ENCODE measurements at regions of chr2 and their contacts with region 1.

Region 1: DNA sequence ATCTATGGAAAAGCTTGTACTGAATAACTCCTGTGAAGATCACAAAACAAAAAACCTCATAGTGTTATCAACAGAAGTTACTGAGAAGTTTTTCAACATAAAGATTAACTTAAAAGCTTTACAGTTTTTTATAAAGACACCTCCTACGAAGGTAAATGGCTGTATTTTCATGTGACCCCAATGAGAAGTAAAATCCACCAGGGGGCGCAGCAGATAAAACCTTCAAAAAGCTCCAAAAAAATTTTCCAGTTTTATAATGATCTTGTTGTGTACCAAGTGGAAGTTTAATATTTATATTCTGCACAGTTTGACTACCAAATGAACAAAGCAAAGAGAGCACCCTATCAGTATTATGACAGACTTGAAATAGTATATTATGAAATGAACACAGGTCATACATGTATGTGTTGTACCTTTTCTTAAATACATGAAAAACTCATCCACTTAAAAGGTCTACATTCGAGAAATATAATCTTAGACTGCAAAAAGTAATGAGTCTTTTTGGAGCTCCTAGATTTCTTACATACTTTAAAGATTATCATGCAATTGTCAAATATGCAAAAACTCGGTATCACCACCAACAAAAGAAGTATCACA is 38.5 kb downstream of the PNO1 start:
- DNase-seq: peak; percentile 45
- H3K4me3 ChIP-seq: no peak overlapping the region
- H3K27ac ChIP-seq: no peak overlapping the region
- H3K4me1 ChIP-seq: peaks cover 36% of the 10 kb centered on the region
- H3K27me3 ChIP-seq: no peaks in the 10 kb centered on the region
- CTCF ChIP-seq: peak; percentile 30 to 35
- POLR2A ChIP-seq: no peak

Region 2: DNA sequence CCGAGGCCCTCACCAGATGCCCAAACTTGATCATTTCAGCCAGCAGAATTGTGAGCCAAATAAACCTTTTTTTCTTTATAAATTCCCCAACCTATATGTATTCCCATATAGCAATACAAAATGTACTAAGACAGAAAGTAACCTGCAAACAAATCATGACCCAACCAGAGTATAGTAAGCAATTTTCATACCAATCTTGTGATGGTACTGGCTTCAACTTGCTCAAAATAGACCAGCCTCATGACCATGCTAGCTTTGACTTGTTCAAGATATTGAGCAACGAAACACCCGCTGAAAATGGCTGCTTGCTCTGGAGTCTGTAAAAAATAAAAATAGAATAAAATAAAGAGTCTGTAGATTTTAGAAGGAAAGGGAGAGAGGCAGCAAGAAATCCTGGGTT is 231.0 kb before region 1 on chr2:
- CTCF ChIA-PET with region 1: no interaction called
- POLR2A ChIA-PET with region 1: no interaction called
- dilution Hi-C with region 1: no loop called
- intact Hi-C with region 1: no loop called
- DNase-seq: no peak
- H3K4me3 ChIP-seq: no peak overlapping the region
- H3K27ac ChIP-seq: no peak overlapping the region
- H3K4me1 ChIP-seq: no peaks in the 10 kb centered on the region
- H3K27me3 ChIP-seq: no peaks in the 10 kb centered on the region
- CTCF ChIP-seq: no peak
- POLR2A ChIP-seq: no peak

Region 3: GRCh38 chr2:68044099-68044498 is 152.1 kb before region 1 on chr2:
- CTCF ChIA-PET with region 1: no interaction called
- POLR2A ChIA-PET with region 1: no interaction called
- dilution Hi-C with region 1: no loop called
- intact Hi-C with region 1: no loop called
- DNase-seq: peak; percentile 25
- H3K4me3 ChIP-seq: no peak overlapping the region
- H3K27ac ChIP-seq: peak overlapping the region; percentile 21
- H3K4me1 ChIP-seq: peaks cover 4% of the 10 kb centered on the region
- H3K27me3 ChIP-seq: no peaks in the 10 kb centered on the region
- CTCF ChIP-seq: no peak
- POLR2A ChIP-seq: no peak

Region 4: GRCh38 chr2:68185541-68186164 is 10.6 kb before region 1 on chr2:
- CTCF ChIA-PET with region 1: interaction called, 36 read pairs
- POLR2A ChIA-PET with region 1: no interaction called
- dilution Hi-C with region 1: no loop called
- intact Hi-C with region 1: no loop called
- DNase-seq: peak; percentile 37
- H3K4me3 ChIP-seq: no peak overlapping the region
- H3K27ac ChIP-seq: no peak overlapping the region
- H3K4me1 ChIP-seq: no peaks in the 10 kb centered on the region
- H3K27me3 ChIP-seq: no peaks in the 10 kb centered on the region
- CTCF ChIP-seq: peak; percentile 70 to 80
- POLR2A ChIP-seq: no peak

Region 5: DNA sequence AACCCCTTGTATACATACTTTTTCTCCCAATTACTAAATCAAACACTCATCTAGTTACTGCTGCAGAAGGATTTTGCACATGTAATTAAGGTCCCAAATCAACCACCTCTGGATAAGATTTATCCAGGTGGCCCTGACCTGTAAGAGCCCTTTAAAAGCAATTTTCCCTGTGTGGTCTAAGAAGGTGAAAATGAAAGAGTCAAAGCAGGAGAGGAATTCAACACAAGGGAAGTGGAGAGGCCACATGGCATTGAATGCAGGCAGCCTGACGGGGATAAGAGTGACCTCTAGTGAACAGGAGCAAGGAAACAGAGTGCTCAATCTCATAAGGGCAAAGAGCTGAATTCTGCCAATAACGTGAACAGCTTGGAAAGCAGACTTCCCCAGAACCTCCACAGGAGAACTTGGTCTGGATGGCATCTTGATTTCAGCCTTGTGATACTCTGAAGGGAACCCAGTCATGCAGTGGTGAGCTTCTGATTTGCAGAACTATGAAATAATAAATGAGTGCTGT is 29.0 kb after region 1 on chr2:
- CTCF ChIA-PET with region 1: interaction called, 43 read pairs
- POLR2A ChIA-PET with region 1: no interaction called
- dilution Hi-C with region 1: no loop called
- intact Hi-C with region 1: no loop called
- DNase-seq: peak; percentile 34
- H3K4me3 ChIP-seq: no peak overlapping the region
- H3K27ac ChIP-seq: no peak overlapping the region
- H3K4me1 ChIP-seq: peaks cover 3% of the 10 kb centered on the region
- H3K27me3 ChIP-seq: no peaks in the 10 kb centered on the region
- CTCF ChIP-seq: peak in 1 of 2 donors; percentile 11
- POLR2A ChIP-seq: no peak

Region 6: DNA sequence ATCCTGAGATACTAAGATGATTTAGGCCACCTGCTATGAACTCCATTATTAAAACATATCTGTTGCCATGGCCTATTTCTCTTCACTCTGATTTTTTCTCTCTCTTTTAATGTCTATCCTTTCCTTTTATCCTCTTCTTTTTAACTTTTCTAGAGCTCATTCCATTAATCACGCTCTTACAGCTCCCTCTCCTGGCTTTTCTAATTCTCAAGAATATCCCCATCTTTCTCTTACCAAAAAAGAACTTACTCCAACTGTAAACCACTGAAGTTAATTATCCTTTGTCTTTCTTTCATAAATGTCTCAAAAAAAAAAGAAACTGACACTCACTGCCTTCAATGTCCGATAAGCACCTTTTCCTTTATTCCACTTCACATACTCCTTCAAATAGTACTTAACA is 48.2 kb after region 1 on chr2:
- CTCF ChIA-PET with region 1: interaction called, 52 read pairs
- POLR2A ChIA-PET with region 1: no interaction called
- dilution Hi-C with region 1: no loop called
- intact Hi-C with region 1: no loop called
- DNase-seq: no peak
- H3K4me3 ChIP-seq: no peak overlapping the region
- H3K27ac ChIP-seq: no peak overlapping the region
- H3K4me1 ChIP-seq: peaks cover 21% of the 10 kb centered on the region
- H3K27me3 ChIP-seq: no peaks in the 10 kb centered on the region
- CTCF ChIP-seq: no peak
- POLR2A ChIP-seq: no peak

Region 7: GRCh38 chr2:68282811-68283418 is 86.7 kb after region 1 on chr2:
- CTCF ChIA-PET with region 1: interaction called, 175 read pairs
- POLR2A ChIA-PET with region 1: no interaction called
- dilution Hi-C with region 1: no loop called
- intact Hi-C with region 1: loop called (anchors 1 kb)
- DNase-seq: peak; percentile 35
- H3K4me3 ChIP-seq: no peak overlapping the region
- H3K27ac ChIP-seq: no peak overlapping the region
- H3K4me1 ChIP-seq: no peaks in the 10 kb centered on the region
- H3K27me3 ChIP-seq: no peaks in the 10 kb centered on the region
- CTCF ChIP-seq: peak; percentile 43 to 61
- POLR2A ChIP-seq: no peak

Region 8: DNA sequence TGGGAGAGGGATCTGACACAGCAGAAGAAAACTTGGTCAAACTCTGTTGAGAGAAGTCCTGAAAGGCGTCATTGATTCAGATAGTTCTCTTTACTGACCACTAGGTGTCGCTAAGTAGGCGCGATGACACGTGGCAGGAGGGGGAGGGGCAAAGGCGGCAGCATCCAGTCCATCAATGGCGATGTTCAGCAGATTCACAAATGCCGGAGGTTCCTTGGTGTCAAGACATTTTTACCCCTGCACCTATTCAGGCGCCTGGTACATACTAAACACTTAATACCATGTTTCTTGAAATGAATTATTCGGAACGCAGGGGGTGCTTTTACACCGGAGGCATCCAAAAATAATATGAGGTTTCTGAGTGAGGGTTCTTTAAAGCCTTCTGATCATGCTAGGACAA is 165.9 kb after region 1 on chr2:
- CTCF ChIA-PET with region 1: interaction called, 17 read pairs
- POLR2A ChIA-PET with region 1: no interaction called
- dilution Hi-C with region 1: no loop called
- intact Hi-C with region 1: loop called (anchors 2 kb)
- DNase-seq: peak; percentile 58
- H3K4me3 ChIP-seq: no peak overlapping the region
- H3K27ac ChIP-seq: no peak overlapping the region
- H3K4me1 ChIP-seq: no peaks in the 10 kb centered on the region
- H3K27me3 ChIP-seq: no peaks in the 10 kb centered on the region
- CTCF ChIP-seq: peak; percentile 78 to 84
- POLR2A ChIP-seq: no peak

Region 9: DNA sequence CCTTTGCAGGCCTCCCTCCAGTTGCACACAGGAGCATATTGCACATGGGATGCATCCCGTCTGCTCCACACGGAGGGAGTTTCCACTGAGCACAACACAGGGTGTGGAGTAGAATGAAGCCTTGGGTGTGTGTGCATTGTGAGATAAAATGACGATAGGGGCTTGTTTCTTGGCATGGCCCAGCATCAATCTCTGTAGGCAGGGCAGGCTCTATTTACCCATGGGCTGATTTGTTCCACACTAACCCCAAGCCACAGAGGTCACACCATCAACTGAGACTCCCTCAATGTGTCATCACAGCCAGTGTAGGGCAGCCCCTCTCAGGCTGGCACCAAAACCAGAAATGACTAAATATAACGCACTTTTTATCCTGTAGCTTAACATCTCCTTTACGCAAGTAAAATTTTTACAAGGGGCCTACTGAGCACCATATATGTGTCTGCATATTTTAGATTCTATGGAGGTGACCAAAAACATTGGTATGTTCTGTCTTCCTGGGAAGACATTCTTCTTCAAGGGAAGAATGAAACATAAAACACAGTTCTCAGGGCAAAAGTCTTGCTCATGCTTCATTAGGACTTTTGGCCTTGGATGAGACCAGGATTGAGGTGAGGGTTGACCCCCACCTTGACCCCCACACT is 775.5 kb after region 1 on chr2:
- CTCF ChIA-PET with region 1: no interaction called
- POLR2A ChIA-PET with region 1: no interaction called
- dilution Hi-C with region 1: no loop called
- intact Hi-C with region 1: no loop called
- DNase-seq: no peak
- H3K4me3 ChIP-seq: no peak overlapping the region
- H3K27ac ChIP-seq: no peak overlapping the region
- H3K4me1 ChIP-seq: no peaks in the 10 kb centered on the region
- H3K27me3 ChIP-seq: peaks cover 17 to 20% of the 10 kb centered on the region in 2 experiments
- CTCF ChIP-seq: no peak
- POLR2A ChIP-seq: no peak

Region 10: GRCh38 chr2:69572641-69573040 is 1376.4 kb after region 1 on chr2:
- CTCF ChIA-PET with region 1: no interaction called
- POLR2A ChIA-PET with region 1: no interaction called
- dilution Hi-C with region 1: no loop called
- intact Hi-C with region 1: no loop called
- DNase-seq: peak; percentile 16
- H3K4me3 ChIP-seq: no peak overlapping the region
- H3K27ac ChIP-seq: no peak overlapping the region
- H3K4me1 ChIP-seq: peaks cover 2% of the 10 kb centered on the region
- H3K27me3 ChIP-seq: no peaks in the 10 kb centered on the region
- CTCF ChIP-seq: no peak
- POLR2A ChIP-seq: no peak